ENCODE measurements at regions of chr10 and their contacts with region 1.

Region 1: DNA sequence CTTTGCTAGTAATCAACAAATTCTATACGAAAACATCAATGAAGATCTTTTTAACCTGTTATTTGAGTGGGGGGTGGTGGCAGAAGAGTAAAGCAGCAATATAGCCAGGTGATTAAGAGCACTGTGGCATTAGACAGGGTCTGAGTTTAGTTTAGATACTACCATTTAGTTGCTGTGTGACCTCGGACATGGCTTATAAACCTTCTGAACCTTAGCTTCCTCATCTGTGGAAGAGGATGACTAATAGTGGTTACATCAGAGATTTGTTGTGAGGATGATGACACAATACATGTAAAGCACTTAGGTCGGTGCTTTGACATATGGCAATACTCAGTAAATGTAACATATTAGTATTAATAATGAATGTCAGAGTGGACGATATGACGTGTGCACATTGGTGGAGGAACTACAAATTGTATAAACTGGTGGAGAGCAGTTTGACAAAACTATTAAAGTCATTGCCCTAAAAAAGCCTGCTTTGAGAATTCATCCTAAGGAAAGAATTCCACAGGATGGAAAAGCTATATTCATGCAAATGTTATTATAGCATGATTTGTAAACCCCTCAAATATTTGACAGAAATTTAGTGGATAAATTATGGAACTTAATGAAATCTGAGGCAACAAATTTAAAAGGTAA is 24.3 kb downstream of the SPAG6 start:
- DNase-seq: peak in 1 of 9 experiments; percentile 33
- ATAC-seq: peak; percentile 29
- H3K4me3 ChIP-seq: no peak overlapping the region
- H3K4me3 Mint-ChIP-seq: no peak overlapping the region
- H3K27ac ChIP-seq: no peak overlapping the region
- H3K27ac Mint-ChIP-seq: no peak overlapping the region
- H3K4me1 ChIP-seq: peaks cover 3% of the 10 kb centered on the region
- H3K4me1 Mint-ChIP-seq: peaks cover 12% of the 10 kb centered on the region
- H3K27me3 ChIP-seq: no peaks in the 10 kb centered on the region
- H3K27me3 Mint-ChIP-seq: no peaks in the 10 kb centered on the region
- CTCF ChIP-seq: no peak

Region 2: GRCh38 chr10:21754410-21755011 is 615.0 kb before region 1 on chr10:
- CTCF ChIA-PET with region 1: no interaction called
- POLR2A ChIA-PET with region 1: no interaction called
- intact Hi-C with region 1: loop called in 1 of 2 experiments (anchors 5 kb)
- DNase-seq: no peak
- ATAC-seq: no peak
- H3K4me3 ChIP-seq: no peak overlapping the region
- H3K4me3 Mint-ChIP-seq: no peak overlapping the region
- H3K27ac ChIP-seq: no peak overlapping the region
- H3K27ac Mint-ChIP-seq: no peak overlapping the region
- H3K4me1 ChIP-seq: no peaks in the 10 kb centered on the region
- H3K4me1 Mint-ChIP-seq: no peaks in the 10 kb centered on the region
- H3K27me3 ChIP-seq: no peaks in the 10 kb centered on the region
- H3K27me3 Mint-ChIP-seq: no peaks in the 10 kb centered on the region
- CTCF ChIP-seq: no peak

Region 3: GRCh38 chr10:22335173-22336123 is 34.1 kb before region 1 on chr10:
- CTCF ChIA-PET with region 1: no interaction called
- POLR2A ChIA-PET with region 1: no interaction called
- intact Hi-C with region 1: loop called in 1 of 2 experiments (anchors 1 kb)
- DNase-seq: peak in 6 of 9 experiments; percentile 64 to 93 (median 81)
- ATAC-seq: peak; percentile 81
- H3K4me3 ChIP-seq: peak overlapping the region; percentile 50 to 55
- H3K4me3 Mint-ChIP-seq: peak overlapping the region; percentile 86
- H3K27ac ChIP-seq: peak overlapping the region; percentile 31 to 32
- H3K27ac Mint-ChIP-seq: peak overlapping the region; percentile 92
- H3K4me1 ChIP-seq: peaks cover 52% of the 10 kb centered on the region
- H3K4me1 Mint-ChIP-seq: peaks cover 34% of the 10 kb centered on the region
- H3K27me3 ChIP-seq: peaks cover 46 to 52% of the 10 kb centered on the region in 2 experiments
- H3K27me3 Mint-ChIP-seq: peaks cover 42% of the 10 kb centered on the region
- CTCF ChIP-seq: no peak

Region 4: GRCh38 chr10:22420787-22421517 is 51.4 kb after region 1 on chr10:
- CTCF ChIA-PET with region 1: no interaction called
- POLR2A ChIA-PET with region 1: no interaction called
- intact Hi-C with region 1: no loop called
- DNase-seq: peak in 3 of 9 experiments; percentile 8 to 56 (median 33)
- ATAC-seq: peak; percentile 49
- H3K4me3 ChIP-seq: no peak overlapping the region
- H3K4me3 Mint-ChIP-seq: no peak overlapping the region
- H3K27ac ChIP-seq: no peak overlapping the region
- H3K27ac Mint-ChIP-seq: no peak overlapping the region
- H3K4me1 ChIP-seq: no peaks in the 10 kb centered on the region
- H3K4me1 Mint-ChIP-seq: no peaks in the 10 kb centered on the region
- H3K27me3 ChIP-seq: no peaks in the 10 kb centered on the region
- H3K27me3 Mint-ChIP-seq: peaks cover 5% of the 10 kb centered on the region
- CTCF ChIP-seq: peak; percentile 37